H1 (cell line): ENCODE measurements at regions of chr3 and their contacts with region 1.

Region 1: DNA sequence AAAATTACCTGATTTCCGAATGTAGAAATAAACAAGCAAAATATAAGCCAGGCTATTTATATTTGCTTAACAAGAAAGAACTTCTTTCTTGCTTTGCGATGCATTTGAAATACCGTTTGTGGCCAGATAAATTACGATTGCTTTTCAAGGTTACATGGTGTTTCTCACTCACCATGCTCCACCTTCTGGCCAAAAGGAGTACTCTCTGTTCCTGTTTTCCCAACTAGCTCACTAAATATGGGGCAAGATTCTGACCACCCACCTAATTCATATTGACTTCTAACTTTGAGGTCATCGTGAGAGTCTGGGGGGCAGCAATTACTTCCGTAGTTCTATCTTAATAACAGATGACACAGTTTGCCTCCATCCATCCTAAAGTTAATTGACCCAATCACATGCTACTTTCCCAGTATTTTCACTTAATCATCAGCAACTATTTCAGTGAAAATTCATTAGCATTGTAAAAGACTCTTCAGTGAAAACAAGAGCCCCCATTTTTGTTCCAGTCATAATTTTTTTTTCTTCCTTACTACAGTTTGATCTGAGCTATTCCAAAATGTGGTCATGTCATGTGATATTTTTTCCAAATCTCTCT is 25.9 kb downstream of the ACP3 start:
- DNase-seq: peak in 1 of 2 experiments; percentile 53
- H3K4me3 ChIP-seq: no peak overlapping the region
- H3K27ac ChIP-seq: no peak overlapping the region
- H3K4me1 ChIP-seq: peaks cover 0 to 2% (median 0%) of the 10 kb centered on the region in 4 experiments; a peak in 1 of 7 replicates
- H3K27me3 ChIP-seq: no peaks in the 10 kb centered on the region
- CTCF ChIP-seq: peak in 2 of 3 experiments; percentile 82 to 86; a peak in 3 of 4 replicates
- EP300 ChIP-seq: no peak
- POLR2A ChIP-seq: no peak
- RAD21 ChIP-seq: peak; percentile 84 to 87

Region 2: DNA sequence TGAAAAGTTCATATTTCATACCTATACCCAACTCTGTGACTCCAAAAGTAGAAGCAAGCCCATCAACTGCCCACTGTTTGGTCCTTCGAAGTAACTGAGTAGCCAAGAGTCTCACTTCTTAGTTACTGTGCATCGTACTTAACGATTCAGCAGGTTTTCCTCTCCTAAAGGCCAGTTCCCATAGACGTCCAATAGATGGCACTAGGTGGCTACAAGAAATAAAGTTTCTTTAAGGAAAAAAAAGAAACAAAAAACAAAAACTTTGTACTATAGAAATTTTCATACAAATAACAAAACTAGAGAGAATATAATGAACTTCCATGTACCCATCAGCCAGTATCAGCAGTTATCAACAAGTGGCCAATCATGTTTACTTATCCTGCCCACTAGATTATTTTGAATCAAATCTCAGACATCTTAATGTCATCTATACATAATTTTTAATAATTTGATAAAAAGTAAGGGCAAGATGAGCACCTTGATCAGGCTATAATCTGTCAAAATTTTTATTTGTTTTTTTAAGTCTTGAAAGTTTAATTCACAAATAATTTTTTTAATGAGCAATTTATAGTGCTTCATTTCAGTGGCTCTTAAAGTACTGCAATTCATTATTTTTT is 89.7 kb before region 1 on chr3:
- CTCF ChIA-PET with region 1: interaction called, 226 read pairs
- POLR2A ChIA-PET with region 1: no interaction called
- DNase-seq: no peak
- H3K4me3 ChIP-seq: no peak overlapping the region
- H3K27ac ChIP-seq: no peak overlapping the region
- H3K4me1 ChIP-seq: 0 out of 7 replicates have a peak, but pooled peaks cover 0 to 2% (median 0%) of the 10 kb centered on the region in 4 experiments
- H3K27me3 ChIP-seq: no peaks in the 10 kb centered on the region
- CTCF ChIP-seq: peak in 2 of 3 experiments; percentile 57 to 68; a peak in 3 of 4 replicates
- EP300 ChIP-seq: no peak
- POLR2A ChIP-seq: no peak
- RAD21 ChIP-seq: peak; percentile 73 to 78

Region 3: DNA sequence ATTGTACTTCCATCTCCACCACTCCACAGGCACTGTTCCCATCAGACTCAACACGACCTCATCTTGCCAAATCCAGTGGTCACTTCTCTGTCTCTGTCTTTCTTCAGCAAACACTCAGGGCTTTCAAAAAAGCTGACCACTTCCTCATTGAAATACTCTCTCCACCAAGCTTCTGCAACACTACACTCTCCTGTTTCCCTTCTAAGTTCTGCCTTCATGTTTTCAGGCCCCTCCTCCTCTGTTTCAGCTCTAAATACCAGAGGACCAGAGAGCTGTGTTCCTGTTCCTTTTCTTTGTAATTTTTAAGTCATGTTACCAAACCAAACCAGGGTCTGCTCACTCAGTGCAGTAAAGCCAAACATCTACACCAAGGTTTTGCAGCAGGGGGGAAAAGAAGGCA is 59.7 kb before region 1 on chr3:
- CTCF ChIA-PET with region 1: interaction called, 44 read pairs
- POLR2A ChIA-PET with region 1: no interaction called
- DNase-seq: no peak
- H3K4me3 ChIP-seq: no peak overlapping the region
- H3K27ac ChIP-seq: no peak overlapping the region
- H3K4me1 ChIP-seq: peaks cover 10 to 22% (median 11%) of the 10 kb centered on the region in 4 experiments
- H3K27me3 ChIP-seq: no peaks in the 10 kb centered on the region
- CTCF ChIP-seq: no peak
- EP300 ChIP-seq: no peak
- POLR2A ChIP-seq: no peak
- RAD21 ChIP-seq: no peak

Region 4: GRCh38 chr3:132325103-132325606 is 18.0 kb before region 1 on chr3:
- CTCF ChIA-PET with region 1: interaction called, 80 read pairs
- POLR2A ChIA-PET with region 1: interaction called, 6 read pairs
- DNase-seq: no peak
- H3K4me3 ChIP-seq: no peak overlapping the region
- H3K27ac ChIP-seq: no peak overlapping the region
- H3K4me1 ChIP-seq: no peaks in the 10 kb centered on the region
- H3K27me3 ChIP-seq: no peaks in the 10 kb centered on the region
- CTCF ChIP-seq: no peak
- EP300 ChIP-seq: no peak
- POLR2A ChIP-seq: no peak
- RAD21 ChIP-seq: no peak

Region 5: GRCh38 chr3:132380920-132381319 is 37.8 kb after region 1 on chr3:
- CTCF ChIA-PET with region 1: interaction called, 10 read pairs
- POLR2A ChIA-PET with region 1: interaction called, 4 read pairs
- DNase-seq: no peak
- H3K4me3 ChIP-seq: no peak overlapping the region
- H3K27ac ChIP-seq: peak overlapping the region; percentile 82; the same call in 1 of the 2 replicates
- H3K4me1 ChIP-seq: peaks cover 18 to 25% (median 21%) of the 10 kb centered on the region in 4 experiments
- H3K27me3 ChIP-seq: no peaks in the 10 kb centered on the region
- CTCF ChIP-seq: no peak
- EP300 ChIP-seq: no peak
- POLR2A ChIP-seq: no peak
- RAD21 ChIP-seq: no peak